ENCODE measurements at regions of chr10 and their contacts with region 1.

Region 1: GRCh38 chr10:59906417-59907202 is at the start of gene CCDC6:
- DNase-seq: peak; percentile 86
- H3K4me3 Mint-ChIP-seq: peak within 1 kb of the TSS; percentile 98
- H3K27ac Mint-ChIP-seq: peak within 1 kb of the TSS; percentile 99
- H3K4me1 Mint-ChIP-seq: peaks cover 55% of the 10 kb centered on the region
- H3K27me3 Mint-ChIP-seq: peaks cover 2% of the 10 kb centered on the region
- total RNA-seq, gene CCDC6: 97.6 and 103 TPM in 2 replicates

Region 2: GRCh38 chr10:58268870-58269605 is 1637.6 kb before region 1 on chr10 and contains the start of gene CISD1:
- intact Hi-C with region 1: loop called (anchors 5 kb)
- DNase-seq: peak; percentile 95
- H3K4me3 Mint-ChIP-seq: peak within 1 kb of the TSS; percentile 94
- H3K27ac Mint-ChIP-seq: peak within 1 kb of the TSS; percentile 98
- H3K4me1 Mint-ChIP-seq: peaks cover 40% of the 10 kb centered on the region
- H3K27me3 Mint-ChIP-seq: no peaks in the 10 kb centered on the region
- total RNA-seq, gene CISD1: 50.4 and 56.0 TPM in 2 replicates

Region 3: GRCh38 chr10:59808896-59809643 is 97.5 kb before region 1 on chr10:
- intact Hi-C with region 1: loop called (anchors 1 kb)
- DNase-seq: peak; percentile 56
- H3K4me3 Mint-ChIP-seq: no peak overlapping the region
- H3K27ac Mint-ChIP-seq: no peak overlapping the region
- H3K4me1 Mint-ChIP-seq: peaks cover 5% of the 10 kb centered on the region
- H3K27me3 Mint-ChIP-seq: no peaks in the 10 kb centered on the region

Region 4: GRCh38 chr10:59885430-59886134 is 21.0 kb before region 1 on chr10:
- intact Hi-C with region 1: loop called (anchors 1 kb)
- DNase-seq: no peak
- H3K4me3 Mint-ChIP-seq: peak overlapping the region; percentile 63
- H3K27ac Mint-ChIP-seq: peak overlapping the region; percentile 94
- H3K4me1 Mint-ChIP-seq: peaks cover 88% of the 10 kb centered on the region
- H3K27me3 Mint-ChIP-seq: no peaks in the 10 kb centered on the region

Region 5: DNA sequence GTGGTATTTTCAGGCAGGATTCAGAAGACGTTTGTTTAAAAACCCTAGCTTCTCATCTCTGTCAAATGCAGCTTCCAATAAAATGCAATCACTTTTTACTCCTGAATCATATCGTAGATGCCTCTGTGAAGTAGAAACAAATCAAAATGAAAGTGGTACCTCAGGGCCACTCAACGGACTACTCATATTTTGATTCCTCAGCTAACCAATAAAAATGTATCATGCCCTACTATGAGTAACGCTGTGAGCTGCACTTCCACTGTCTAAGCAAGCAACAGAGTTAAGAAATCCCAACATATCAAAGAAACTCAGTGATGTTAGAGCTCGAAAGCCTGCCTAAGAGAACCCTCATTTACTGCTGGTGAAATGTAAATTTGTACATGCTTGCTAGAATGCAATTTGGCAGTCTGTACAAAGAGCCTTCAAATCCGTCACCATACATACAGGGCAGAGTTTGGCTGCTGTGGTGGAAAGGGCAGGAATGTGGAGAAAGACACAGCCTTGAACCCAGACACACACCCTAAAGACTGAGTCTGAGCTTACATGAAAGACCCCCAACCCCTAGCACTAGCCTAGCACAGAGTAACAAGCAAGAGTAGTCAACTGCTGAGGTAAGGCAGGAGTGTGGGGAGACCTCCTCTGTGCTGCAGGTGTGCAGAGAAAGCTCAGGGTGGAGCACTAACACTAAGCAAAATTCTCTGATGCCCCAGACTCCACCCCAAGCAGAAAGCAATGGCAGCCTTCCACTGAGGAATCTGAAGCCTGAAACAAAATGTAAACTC is 331.6 kb after region 1 on chr10:
- intact Hi-C with region 1: loop called (anchors 2 kb)
- DNase-seq: no peak
- H3K4me3 Mint-ChIP-seq: peak overlapping the region; percentile 27
- H3K27ac Mint-ChIP-seq: peak overlapping the region; percentile 33
- H3K4me1 Mint-ChIP-seq: peaks cover 30% of the 10 kb centered on the region
- H3K27me3 Mint-ChIP-seq: no peaks in the 10 kb centered on the region

Region 6: DNA sequence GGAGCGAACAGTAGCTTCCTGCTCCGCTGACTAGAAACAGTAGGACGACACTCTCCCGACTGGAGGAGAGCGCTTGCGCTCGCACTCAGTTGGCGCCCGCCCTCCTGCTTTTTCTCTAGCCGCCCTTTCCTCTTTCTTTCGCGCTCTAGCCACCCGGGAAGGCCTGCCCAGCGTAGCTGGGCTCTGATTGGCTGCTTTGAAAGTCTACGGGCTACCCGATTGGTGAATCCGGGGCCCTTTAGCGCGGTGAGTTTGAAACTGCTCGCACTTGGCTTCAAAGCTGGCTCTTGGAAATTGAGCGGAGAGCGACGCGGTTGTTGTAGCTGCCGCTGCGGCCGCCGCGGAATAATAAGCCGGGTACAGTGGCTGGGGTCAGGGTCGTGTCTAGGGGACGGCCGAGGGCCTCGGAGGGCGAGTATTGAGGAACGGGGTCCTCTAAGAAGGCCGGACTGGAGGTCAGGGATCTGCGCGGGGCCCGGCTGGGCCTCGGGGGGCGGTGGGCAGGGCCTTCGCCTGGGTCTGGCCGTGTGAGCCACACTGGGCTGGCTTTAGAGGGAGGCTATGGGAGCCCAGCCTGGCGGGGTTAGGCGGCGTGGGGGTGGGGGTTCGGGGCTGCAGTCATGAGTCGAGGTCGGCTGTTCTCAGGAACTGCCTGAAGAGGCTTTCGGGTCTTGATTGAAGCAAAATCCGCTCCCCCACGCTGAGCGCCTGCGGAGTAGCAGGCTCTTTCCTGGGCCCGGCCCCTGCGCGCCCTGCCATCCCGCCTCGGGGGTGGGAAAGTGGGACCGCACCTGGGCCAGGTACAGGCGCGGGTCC is 871.8 kb after region 1 on chr10 and contains the start of gene CDK1:
- intact Hi-C with region 1: loop called (anchors 1 kb)
- DNase-seq: peak; percentile 97
- H3K4me3 Mint-ChIP-seq: peak within 1 kb of the TSS; percentile 99
- H3K27ac Mint-ChIP-seq: peak within 1 kb of the TSS; percentile 97
- H3K4me1 Mint-ChIP-seq: peaks cover 35% of the 10 kb centered on the region
- H3K27me3 Mint-ChIP-seq: peaks cover 2% of the 10 kb centered on the region
- total RNA-seq, gene CDK1: 100 and 104 TPM in 2 replicates

Measured in activated T-helper 1 cell treated with anti-CD3 and anti-CD28 coated beads, Interleukin-12 subunit alpha, Interleukin-12 subunit beta, Interleukin-2, Interleukin-4 antibody, amounts not matched to agents 30 ng/mL and 10 ng/mL and 1 ng/mL, durations not matched to agents 14 hours and 24 hours and 36 hours (primary cell).